ENCODE measurements at regions of chr3 and their contacts with region 1.

Region 1: DNA sequence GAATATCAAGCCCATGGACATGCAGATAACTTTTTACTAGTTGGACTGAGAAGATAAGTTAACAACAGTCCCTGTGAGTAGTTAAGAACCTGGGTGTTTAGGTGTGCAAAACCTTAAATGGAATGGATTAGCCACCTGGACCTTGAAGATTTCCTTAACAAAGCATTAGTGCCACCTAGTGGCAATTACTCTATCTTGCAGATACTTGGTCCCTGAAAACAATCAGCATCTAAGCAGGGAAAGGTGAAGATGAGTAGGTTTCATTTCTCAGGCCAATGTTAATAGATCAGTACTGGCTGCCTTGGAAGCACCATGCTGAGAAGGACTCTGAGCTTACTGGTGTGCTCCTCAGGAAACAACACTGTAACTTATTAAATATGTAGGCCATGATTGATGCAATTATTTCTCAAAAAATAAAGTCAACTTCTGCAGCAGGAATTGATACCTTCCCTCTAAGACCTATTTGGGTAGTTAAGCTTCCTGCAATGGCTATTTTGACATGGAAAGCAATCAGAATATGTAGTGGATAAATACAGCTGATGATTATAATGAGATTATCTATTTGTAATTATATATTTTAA is 329.4 kb downstream of the TBC1D5 start:
- DNase-seq: no peak
- ATAC-seq: peak; percentile 67
- H3K4me3 Mint-ChIP-seq: no peak overlapping the region
- H3K27ac Mint-ChIP-seq: no peak overlapping the region
- H3K4me1 Mint-ChIP-seq: no peaks in the 10 kb centered on the region
- H3K27me3 Mint-ChIP-seq: no peaks in the 10 kb centered on the region

Region 2: DNA sequence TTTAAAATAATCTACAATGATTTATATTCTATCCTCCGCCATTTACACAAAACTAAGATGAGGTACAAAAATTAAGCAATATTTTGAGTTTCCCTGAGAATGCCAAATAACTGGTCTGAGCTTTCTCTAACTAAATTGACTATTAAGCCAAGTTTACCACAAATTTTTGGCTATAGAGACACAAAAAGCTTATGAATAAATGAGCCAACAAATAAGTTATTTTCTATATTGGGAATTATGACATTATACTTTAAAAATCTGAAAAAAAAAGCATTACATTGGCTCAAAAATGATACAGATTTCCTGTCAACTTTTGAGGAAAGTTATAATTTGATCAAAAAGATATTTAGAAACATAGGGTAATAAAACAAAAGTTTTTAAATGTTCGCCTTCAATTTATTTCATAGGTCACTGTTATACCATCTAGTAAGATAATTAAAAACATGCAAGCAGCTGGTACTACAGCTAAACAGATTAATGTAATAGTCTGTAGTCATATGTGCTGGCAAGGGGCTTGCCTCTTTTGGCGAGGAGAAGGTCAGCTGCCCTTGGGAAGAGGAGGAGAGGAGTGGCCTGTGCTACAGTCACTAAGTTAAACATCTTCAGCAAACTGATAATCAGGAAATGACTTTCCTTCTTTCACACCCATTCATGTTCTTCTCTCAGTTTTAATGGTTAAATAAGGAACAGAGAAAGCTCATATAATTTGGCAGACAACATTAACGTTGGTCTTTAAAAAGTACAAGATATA is 10.9 kb after region 1 on chr3:
- CTCF ChIA-PET with region 1: interaction called, 10 read pairs
- DNase-seq: no peak
- ATAC-seq: no peak
- H3K4me3 Mint-ChIP-seq: no peak overlapping the region
- H3K27ac Mint-ChIP-seq: no peak overlapping the region
- H3K4me1 Mint-ChIP-seq: no peaks in the 10 kb centered on the region
- H3K27me3 Mint-ChIP-seq: no peaks in the 10 kb centered on the region

Region 3: GRCh38 chr3:17645072-17645698 is 232.1 kb after region 1 on chr3:
- CTCF ChIA-PET with region 1: no interaction called
- DNase-seq: no peak
- ATAC-seq: no peak
- H3K4me3 Mint-ChIP-seq: no peak overlapping the region
- H3K27ac Mint-ChIP-seq: no peak overlapping the region
- H3K4me1 Mint-ChIP-seq: peaks cover 2% of the 10 kb centered on the region
- H3K27me3 Mint-ChIP-seq: no peaks in the 10 kb centered on the region

Measured in activated CD8-positive, alpha-beta memory T cell treated with anti-CD3 and anti-CD28 coated beads, Interleukin-2, amount 10 ng/mL, durations not matched to agents 7 days and 5 days (primary cell).